CD4-positive, alpha-beta T cell (primary cell): ENCODE measurements at regions of chr1 and their contacts with region 1.

Region 1: DNA sequence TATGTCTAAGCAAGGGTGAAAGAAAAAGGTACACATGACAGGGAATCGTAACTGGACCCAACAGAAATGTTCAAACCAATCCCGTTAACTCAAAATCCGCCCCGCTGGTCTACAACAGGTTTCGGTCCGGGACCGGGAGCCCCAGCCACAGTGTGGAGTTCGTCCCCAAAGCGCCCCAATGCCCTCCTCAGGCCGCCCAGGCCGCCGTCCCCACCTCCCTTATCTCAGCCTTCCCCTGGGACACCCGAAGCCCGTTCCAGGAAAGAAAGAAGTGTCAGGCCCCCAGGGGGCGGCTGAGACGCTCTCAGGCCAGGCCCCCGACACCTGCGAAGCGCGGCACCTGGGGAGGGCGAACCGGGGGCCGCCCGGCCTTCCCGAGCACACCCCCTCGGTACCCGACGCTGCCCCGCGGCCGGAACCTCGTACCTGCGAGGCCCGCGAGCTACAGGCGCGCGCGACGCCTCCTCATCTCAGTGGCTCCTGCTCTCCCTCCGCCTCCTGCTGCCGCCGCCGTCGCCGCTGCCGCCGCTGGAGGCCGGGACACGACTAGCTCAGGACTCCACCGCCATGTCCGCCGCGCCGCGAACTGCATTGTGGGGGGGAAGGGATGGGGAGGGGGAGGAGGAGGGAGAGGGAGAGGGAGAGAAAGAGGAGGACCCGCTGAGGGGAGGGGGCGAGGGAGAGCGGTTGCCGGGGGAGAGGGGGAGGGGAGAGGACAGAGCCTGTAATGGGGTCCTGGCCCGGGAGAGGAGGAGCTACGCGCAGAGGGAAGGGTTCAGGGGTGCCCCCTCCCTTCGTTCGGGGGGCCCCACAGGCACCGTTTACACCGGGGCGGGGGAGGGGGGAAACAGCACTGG is at the start of gene TUT4:
- DNase-seq: peak; percentile 58 to 89 (median 70)
- ATAC-seq: peak; percentile 35
- H3K4me3 ChIP-seq: peak within 1 kb of the TSS; percentile 92
- H3K4me3 Mint-ChIP-seq: peak within 1 kb of the TSS; percentile 84
- H3K27ac ChIP-seq: peak within 1 kb of the TSS; percentile 91 to 94
- H3K27ac Mint-ChIP-seq: peak within 1 kb of the TSS; percentile 90
- H3K4me1 ChIP-seq: peaks cover 18% of the 10 kb centered on the region
- H3K4me1 Mint-ChIP-seq: peaks cover 47% of the 10 kb centered on the region
- H3K27me3 ChIP-seq: no peaks in the 10 kb centered on the region
- H3K27me3 Mint-ChIP-seq: no peaks in the 10 kb centered on the region
- CTCF ChIP-seq: peak; percentile 23
- total RNA-seq, gene TUT4: 141 to 147 TPM

Region 2: DNA sequence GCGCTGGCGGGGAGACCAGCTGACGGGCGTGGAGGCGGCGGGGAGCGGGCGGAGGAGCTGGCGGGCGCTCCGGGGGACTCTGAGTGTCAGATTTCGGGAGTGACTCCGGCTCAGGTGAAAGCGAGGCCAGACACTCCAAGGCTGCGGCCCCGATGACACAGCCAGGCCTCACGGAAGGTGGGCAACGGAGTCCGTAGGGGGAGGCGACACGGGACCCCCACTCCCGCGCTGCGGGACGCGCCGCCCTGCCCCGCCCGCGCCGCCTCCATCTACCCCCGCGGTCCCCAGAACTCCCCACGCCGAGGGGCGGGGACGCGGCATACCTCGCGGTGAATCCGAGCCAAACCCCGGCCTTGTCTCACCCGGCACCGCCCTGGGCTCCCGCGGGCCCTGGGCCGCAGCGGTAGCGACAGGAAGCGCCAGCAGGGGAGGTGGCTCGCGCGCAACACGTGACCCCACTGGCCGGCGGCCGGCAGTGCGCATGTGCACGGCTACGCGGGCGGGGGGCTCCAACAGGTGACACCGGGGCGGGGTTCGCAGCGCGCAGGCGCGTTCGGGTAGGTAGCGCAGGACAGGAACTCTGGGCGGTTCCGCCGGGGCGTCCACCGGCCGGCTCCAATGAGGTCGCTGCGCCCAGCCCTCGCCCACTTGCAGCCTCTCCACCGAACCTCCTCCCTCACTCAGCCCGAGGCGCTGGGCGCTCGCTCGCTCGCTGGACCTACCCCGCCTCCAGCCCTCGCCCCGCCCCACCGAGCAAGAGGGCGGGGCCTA is 186.8 kb before region 1 on chr1 and contains the start of gene CC2D1B:
- CTCF ChIA-PET with region 1: interaction called, 4 read pairs
- POLR2A ChIA-PET with region 1: interaction called, 6 read pairs
- intact Hi-C with region 1: loop called in 1 of 2 experiments (anchors 5 kb)
- DNase-seq: peak; percentile 97 to 100 (median 99)
- ATAC-seq: peak; percentile 79
- H3K4me3 ChIP-seq: peak within 1 kb of the TSS; percentile 76
- H3K4me3 Mint-ChIP-seq: peak within 1 kb of the TSS; percentile 94
- H3K27ac ChIP-seq: peak within 1 kb of the TSS; percentile 77 to 89
- H3K27ac Mint-ChIP-seq: peak within 1 kb of the TSS; percentile 96
- H3K4me1 ChIP-seq: peaks cover 50% of the 10 kb centered on the region
- H3K4me1 Mint-ChIP-seq: peaks cover 60% of the 10 kb centered on the region
- H3K27me3 ChIP-seq: no peaks in the 10 kb centered on the region
- H3K27me3 Mint-ChIP-seq: no peaks in the 10 kb centered on the region
- CTCF ChIP-seq: no peak
- total RNA-seq, gene CC2D1B: 46.5 to 47.5 TPM

Region 3: GRCh38 chr1:52424231-52424636 is 128.5 kb before region 1 on chr1:
- CTCF ChIA-PET with region 1: interaction called, 4 read pairs
- POLR2A ChIA-PET with region 1: interaction called, 10 read pairs
- intact Hi-C with region 1: loop called (anchors 5 kb)
- DNase-seq: peak in 12 of 14 experiments; percentile 11 to 82 (median 26)
- ATAC-seq: peak; percentile 88
- H3K4me3 ChIP-seq: peak overlapping the region; percentile 28
- H3K4me3 Mint-ChIP-seq: peak overlapping the region; percentile 53
- H3K27ac ChIP-seq: peak overlapping the region; percentile 78 to 81
- H3K27ac Mint-ChIP-seq: peak overlapping the region; percentile 100
- H3K4me1 ChIP-seq: peaks cover 21% of the 10 kb centered on the region
- H3K4me1 Mint-ChIP-seq: peaks cover 58% of the 10 kb centered on the region
- H3K27me3 ChIP-seq: no peaks in the 10 kb centered on the region
- H3K27me3 Mint-ChIP-seq: no peaks in the 10 kb centered on the region
- CTCF ChIP-seq: no peak

Region 4: GRCh38 chr1:52520148-52520547 is 32.6 kb before region 1 on chr1:
- CTCF ChIA-PET with region 1: no interaction called
- POLR2A ChIA-PET with region 1: interaction called, 3 read pairs
- intact Hi-C with region 1: loop called (anchors 5 kb)
- DNase-seq: no peak
- ATAC-seq: no peak
- H3K4me3 ChIP-seq: no peak overlapping the region
- H3K4me3 Mint-ChIP-seq: no peak overlapping the region
- H3K27ac ChIP-seq: no peak overlapping the region
- H3K27ac Mint-ChIP-seq: no peak overlapping the region
- H3K4me1 ChIP-seq: peaks cover 9% of the 10 kb centered on the region
- H3K4me1 Mint-ChIP-seq: peaks cover 50% of the 10 kb centered on the region
- H3K27me3 ChIP-seq: no peaks in the 10 kb centered on the region
- H3K27me3 Mint-ChIP-seq: no peaks in the 10 kb centered on the region
- CTCF ChIP-seq: no peak

Region 5: DNA sequence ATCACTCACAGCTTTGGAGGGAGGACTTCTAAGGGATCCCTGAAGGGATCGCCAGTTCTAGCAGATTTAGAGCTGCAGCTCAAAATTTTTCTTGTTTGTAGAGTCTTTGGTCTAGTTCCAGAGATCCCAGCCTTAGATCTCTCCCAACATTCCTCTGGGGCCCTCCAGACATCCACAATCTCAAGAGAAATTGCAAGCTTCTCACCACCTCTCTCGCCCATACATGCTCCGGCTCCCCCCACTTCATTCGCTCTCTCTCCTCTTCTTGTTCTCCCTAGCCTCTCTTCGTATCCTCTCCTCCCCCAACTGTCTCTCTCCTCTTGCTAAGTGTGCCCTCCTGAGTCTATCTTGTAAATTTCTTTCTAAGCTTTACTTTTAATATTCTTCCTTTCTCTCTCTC is 15.2 kb after region 1 on chr1:
- CTCF ChIA-PET with region 1: no interaction called
- POLR2A ChIA-PET with region 1: interaction called, 12 read pairs
- intact Hi-C with region 1: no loop called
- DNase-seq: peak in 3 of 14 experiments; percentile 8 to 35 (median 34)
- ATAC-seq: peak; percentile 80
- H3K4me3 ChIP-seq: no peak overlapping the region
- H3K4me3 Mint-ChIP-seq: no peak overlapping the region
- H3K27ac ChIP-seq: no peak overlapping the region
- H3K27ac Mint-ChIP-seq: peak overlapping the region; percentile 3
- H3K4me1 ChIP-seq: peaks cover 10% of the 10 kb centered on the region
- H3K4me1 Mint-ChIP-seq: peaks cover 20% of the 10 kb centered on the region
- H3K27me3 ChIP-seq: no peaks in the 10 kb centered on the region
- H3K27me3 Mint-ChIP-seq: no peaks in the 10 kb centered on the region
- CTCF ChIP-seq: no peak

Region 6: GRCh38 chr1:52601991-52602855 is 49.5 kb after region 1 on chr1 and contains the start of gene GPX7:
- CTCF ChIA-PET with region 1: no interaction called
- POLR2A ChIA-PET with region 1: interaction called, 12 read pairs
- intact Hi-C with region 1: loop called (anchors 2 kb)
- DNase-seq: peak; percentile 42 to 86 (median 64)
- ATAC-seq: peak; percentile 84
- H3K4me3 ChIP-seq: peak within 1 kb of the TSS; percentile 74
- H3K4me3 Mint-ChIP-seq: peak within 1 kb of the TSS; percentile 92
- H3K27ac ChIP-seq: peak within 1 kb of the TSS; percentile 62 to 73
- H3K27ac Mint-ChIP-seq: peak within 1 kb of the TSS; percentile 96
- H3K4me1 ChIP-seq: peaks cover 51% of the 10 kb centered on the region
- H3K4me1 Mint-ChIP-seq: peaks cover 50% of the 10 kb centered on the region
- H3K27me3 ChIP-seq: no peaks in the 10 kb centered on the region
- H3K27me3 Mint-ChIP-seq: no peaks in the 10 kb centered on the region
- CTCF ChIP-seq: no peak
- total RNA-seq, gene GPX7: 11.7 to 12.5 TPM

Region 7: DNA sequence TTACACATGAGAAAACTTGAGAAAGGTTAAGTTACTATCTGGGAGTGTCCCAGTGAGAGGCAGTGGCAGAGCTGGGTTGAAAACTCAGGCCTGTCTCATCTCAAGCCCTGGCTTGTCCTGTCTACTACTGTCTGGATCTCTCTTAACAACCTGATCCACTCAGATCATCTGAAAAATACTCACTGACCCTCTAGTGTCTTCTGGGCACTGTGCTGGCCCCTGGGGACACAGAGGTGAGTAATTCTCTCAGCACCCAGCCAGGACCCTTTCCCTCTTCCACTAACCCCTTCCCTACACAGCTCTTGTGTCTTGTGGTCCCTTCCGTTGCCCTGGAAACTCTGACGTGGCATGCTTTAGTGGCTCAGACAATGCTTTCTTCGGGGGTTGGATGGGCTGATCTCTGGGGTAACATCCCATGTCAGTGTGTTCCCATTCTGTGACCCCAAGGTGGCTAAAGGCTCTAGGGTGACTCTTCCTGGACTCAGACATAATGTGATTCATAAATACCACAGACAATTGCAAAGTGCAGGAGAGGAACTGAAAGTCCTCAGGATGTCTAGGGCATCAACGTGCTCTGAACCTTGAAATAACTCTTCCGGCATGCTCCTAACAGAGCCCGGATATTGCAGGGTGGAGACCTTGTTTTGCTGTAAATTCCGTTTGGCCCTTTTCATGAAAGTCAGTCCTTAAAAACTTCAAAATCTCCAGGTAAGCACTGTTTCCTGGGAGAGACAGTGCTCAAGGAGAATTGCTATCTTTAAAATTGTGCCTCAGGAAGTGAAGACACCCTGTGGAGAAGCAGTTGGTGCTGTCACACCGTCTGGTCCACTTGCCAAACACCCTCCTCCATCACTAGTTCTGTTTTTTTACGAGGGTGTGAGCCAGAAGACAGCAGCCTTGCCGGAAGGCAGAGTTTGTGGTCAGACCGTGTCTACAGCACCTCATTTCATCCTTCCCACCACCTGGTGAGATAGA is 84.3 kb after region 1 on chr1:
- CTCF ChIA-PET with region 1: interaction called, 3 read pairs
- POLR2A ChIA-PET with region 1: interaction called, 97 read pairs
- intact Hi-C with region 1: loop called (anchors 2 kb)
- DNase-seq: peak; percentile 58 to 91 (median 66)
- ATAC-seq: peak; percentile 66
- H3K4me3 ChIP-seq: peak overlapping the region; percentile 41
- H3K4me3 Mint-ChIP-seq: peak overlapping the region; percentile 86
- H3K27ac ChIP-seq: peak overlapping the region; percentile 93 to 94
- H3K27ac Mint-ChIP-seq: peak overlapping the region; percentile 98
- H3K4me1 ChIP-seq: peaks cover 92% of the 10 kb centered on the region
- H3K4me1 Mint-ChIP-seq: peaks cover 84% of the 10 kb centered on the region
- H3K27me3 ChIP-seq: no peaks in the 10 kb centered on the region
- H3K27me3 Mint-ChIP-seq: no peaks in the 10 kb centered on the region
- CTCF ChIP-seq: no peak